ENCODE measurements at regions of chr19 and their contacts with region 1.

Region 1: DNA sequence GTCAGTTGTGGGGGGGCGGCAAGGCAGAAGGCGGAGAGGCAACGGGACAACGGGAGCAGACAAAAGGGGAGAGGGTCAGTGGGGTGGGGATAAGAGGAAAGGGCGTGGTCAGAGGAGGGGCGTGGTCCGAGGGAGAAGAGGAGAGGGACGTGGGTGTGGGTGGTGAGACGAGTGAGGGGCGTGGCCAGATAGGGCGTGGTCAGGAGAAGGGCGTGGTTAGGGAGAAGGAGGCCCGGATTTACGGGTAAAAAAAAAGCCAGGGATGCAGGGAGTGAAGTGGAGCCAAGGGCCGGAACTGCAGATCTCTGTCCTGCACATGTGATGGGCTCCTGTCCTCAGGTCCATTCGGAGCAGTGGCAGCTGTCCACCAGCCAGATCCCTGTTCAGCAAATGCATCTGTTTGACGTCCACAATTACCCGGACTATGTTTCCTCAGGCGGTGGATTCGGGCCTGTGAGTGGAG is 21.5 kb downstream of the CPT1C start:
- DNase-seq: peak; percentile 93
- H3K4me3 ChIP-seq: peak overlapping the region in 1 of 2 experiments; percentile 24; a peak in 2 of 4 replicates
- H3K27ac ChIP-seq: peak overlapping the region in 1 of 2 experiments; percentile 75; a peak in 2 of 4 replicates
- H3K4me1 ChIP-seq: peaks cover 0 to 8% of the 10 kb centered on the region in 2 experiments; a peak in 1 of 4 replicates
- H3K27me3 ChIP-seq: no peaks in the 10 kb centered on the region
- CTCF ChIP-seq: no peak
- EP300 ChIP-seq: no peak
- RAD21 ChIP-seq: no peak

Region 2: DNA sequence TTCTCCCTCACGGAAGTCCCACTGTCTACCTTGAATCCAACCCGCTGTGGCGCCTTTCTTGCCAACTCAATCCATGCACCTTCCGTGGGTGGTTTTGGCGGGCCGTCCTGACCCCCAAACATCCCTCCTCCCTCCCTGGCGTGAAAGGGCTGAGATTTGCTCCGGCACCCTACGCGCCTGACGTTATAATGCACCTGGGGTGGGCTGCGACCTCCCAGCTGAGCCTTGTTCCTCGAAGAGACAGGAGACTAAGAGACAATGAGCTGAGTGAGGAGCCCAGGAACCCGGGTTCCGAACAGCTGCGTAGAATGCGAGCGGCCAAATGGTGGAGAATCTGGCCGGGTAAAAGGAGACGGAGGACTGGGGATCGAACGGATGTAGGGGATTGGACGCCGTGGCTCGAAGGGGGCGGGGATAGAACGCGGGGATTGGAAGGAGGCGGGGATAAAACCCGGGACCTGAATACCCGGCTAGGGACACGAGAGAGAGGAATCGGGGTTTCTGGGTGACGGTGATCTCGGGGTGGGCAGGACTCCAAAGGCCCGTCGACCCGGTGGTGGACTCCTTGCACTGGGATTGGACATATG is 21.7 kb before region 1 on chr19 and contains the start of gene CPT1C:
- CTCF ChIA-PET with region 1: interaction called, 10 read pairs
- POLR2A ChIA-PET with region 1: interaction called, 6 read pairs
- DNase-seq: peak; percentile 96
- H3K4me3 ChIP-seq: peak within 1 kb of the TSS; percentile 77 to 81
- H3K27ac ChIP-seq: peak within 1 kb of the TSS; percentile 60 to 95
- H3K4me1 ChIP-seq: peaks cover 6 to 28% of the 10 kb centered on the region in 2 experiments; a peak in 2 of 4 replicates
- H3K27me3 ChIP-seq: no peaks in the 10 kb centered on the region
- CTCF ChIP-seq: no peak
- EP300 ChIP-seq: no peak
- RAD21 ChIP-seq: no peak
- polyA plus RNA-seq, gene CPT1C: 118 and 139 TPM in 2 replicates